Posterior vena cava (tissue), 2 donors: ENCODE measurements at regions of chr9 and their contacts with region 1.

Region 1: GRCh38 chr9:117392992-117393391 is 21.9 kb downstream of the ASTN2 start:
- DNase-seq: no peak

Region 2: DNA sequence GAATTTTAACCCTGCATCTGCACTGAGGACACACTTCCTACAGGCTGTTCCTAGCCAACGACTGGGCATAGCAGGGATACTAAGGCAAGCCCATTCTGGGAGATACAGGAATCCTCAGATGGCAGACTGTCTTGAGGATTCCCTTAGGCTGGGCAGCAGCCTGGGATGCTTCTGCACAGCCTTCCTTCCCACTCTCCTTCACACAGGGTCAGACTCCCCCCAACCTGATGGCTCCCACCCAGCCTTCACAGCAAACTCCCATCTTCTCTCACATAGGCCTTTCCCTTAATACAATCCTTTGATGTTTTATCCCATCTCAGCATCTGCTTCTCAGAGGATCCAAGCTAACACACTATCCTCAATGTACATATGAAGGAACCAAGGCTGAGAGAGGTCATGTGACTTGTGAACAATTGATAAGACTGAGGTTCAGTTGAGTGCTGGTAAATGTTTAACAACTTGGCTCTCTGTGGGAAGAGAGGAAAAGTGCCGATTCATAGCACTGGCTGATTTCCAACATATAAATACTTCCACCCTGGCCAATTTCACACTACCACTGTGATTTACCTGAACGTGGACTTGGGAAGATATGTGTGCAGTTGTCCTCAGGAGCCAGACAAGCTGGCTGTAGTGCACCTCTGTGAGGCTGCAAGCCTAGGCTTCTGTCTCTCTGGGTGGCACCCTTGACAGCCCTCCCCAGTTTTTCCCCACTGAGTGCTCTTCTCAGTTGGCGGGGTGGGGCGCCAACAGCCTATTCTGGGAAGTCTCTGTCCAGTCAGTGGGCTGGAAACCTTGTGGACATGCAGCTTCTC is 826.1 kb before region 1 on chr9:
- intact Hi-C with region 1: no loop called
- DNase-seq: no peak

Region 3: DNA sequence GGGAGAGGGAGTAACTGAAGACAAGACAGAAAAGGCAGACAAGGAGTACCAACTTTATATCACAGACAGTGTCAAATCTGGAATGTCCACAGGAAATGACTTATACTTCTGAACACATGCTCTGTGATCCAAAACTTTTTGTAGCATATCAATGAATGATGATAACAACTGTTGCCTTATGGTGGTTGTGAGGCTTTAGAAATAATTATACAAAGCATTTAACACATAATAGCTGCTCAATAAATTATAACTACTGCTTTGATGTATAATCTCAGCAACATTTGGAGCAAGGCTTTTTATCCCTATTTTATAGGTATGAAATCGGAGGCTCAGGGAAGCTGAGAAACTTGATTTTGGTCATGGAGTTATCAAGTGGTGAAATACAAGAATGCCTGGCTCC is 25.1 kb after region 1 on chr9:
- intact Hi-C with region 1: loop called in 1 of 2 experiments (anchors 1 kb)
- DNase-seq: no peak